Heart left ventricle (tissue), 16 donors: ENCODE measurements at regions of chr11 and their contacts with region 1.

Region 1: GRCh38 chr11:83156150-83156995 is 558 bp upstream of the PCF11 start:
- DNase-seq: peak; percentile 98 to 100 (median 99)
- ATAC-seq: peak; percentile 95 to 98 (median 96)
- H3K4me3 ChIP-seq: peak overlapping the region; percentile 43 to 92 (median 70)
- H3K27ac ChIP-seq: peak overlapping the region; percentile 71 to 99 (median 91)
- H3K4me1 ChIP-seq: peaks cover 2 to 31% (median 19%) of the 10 kb centered on the region in 12 donors
- H3K27me3 ChIP-seq: no peaks in the 10 kb centered on the region
- CTCF ChIP-seq: no peak
- POLR2A ChIP-seq: peak; percentile 17 to 52

Region 2: GRCh38 chr11:82802710-82803109 is 353.7 kb before region 1 on chr11:
- intact Hi-C with region 1: no loop called
- DNase-seq: no peak
- ATAC-seq: no peak
- H3K4me3 ChIP-seq: no peak overlapping the region
- H3K27ac ChIP-seq: no peak overlapping the region
- H3K4me1 ChIP-seq: no peaks in the 10 kb centered on the region
- H3K27me3 ChIP-seq: peaks cover 0 to 16% (median 0%) of the 10 kb centered on the region in 9 donors
- CTCF ChIP-seq: no peak
- POLR2A ChIP-seq: no peak

Region 3: GRCh38 chr11:82927254-82927880 is 229.0 kb before region 1 on chr11:
- intact Hi-C with region 1: loop called in 1 of 10 experiments (anchors 5 kb)
- DNase-seq: no peak
- ATAC-seq: peak in 2 of 4 donors; percentile 41 to 64
- H3K4me3 ChIP-seq: no peak overlapping the region
- H3K27ac ChIP-seq: no peak overlapping the region
- H3K4me1 ChIP-seq: peaks cover 0 to 12% (median 0%) of the 10 kb centered on the region in 12 donors
- H3K27me3 ChIP-seq: no peaks in the 10 kb centered on the region
- CTCF ChIP-seq: peak; percentile 69 to 90 (median 86)
- POLR2A ChIP-seq: no peak

Region 4: GRCh38 chr11:82996966-82997606 is 159.3 kb before region 1 on chr11:
- intact Hi-C with region 1: loop called in 4 of 10 experiments (anchors 5 to 10 kb)
- DNase-seq: no peak
- ATAC-seq: no peak
- H3K4me3 ChIP-seq: no peak overlapping the region
- H3K27ac ChIP-seq: peak overlapping the region in 5 of 12 donors; percentile 8 to 65 (median 40)
- H3K4me1 ChIP-seq: peaks cover 0 to 84% (median 42%) of the 10 kb centered on the region in 12 donors
- H3K27me3 ChIP-seq: no peaks in the 10 kb centered on the region
- CTCF ChIP-seq: no peak
- POLR2A ChIP-seq: no peak

Region 5: GRCh38 chr11:83193315-83194280 is 37.2 kb after region 1 on chr11 and contains the start of gene ANKRD42:
- intact Hi-C with region 1: loop called in 9 of 10 experiments (anchors 1 to 5 kb)
- DNase-seq: peak; percentile 93 to 96 (median 94)
- ATAC-seq: peak; percentile 95 to 98 (median 98)
- H3K4me3 ChIP-seq: peak within 1 kb of the TSS; percentile 49 to 97 (median 84)
- H3K27ac ChIP-seq: peak within 1 kb of the TSS; percentile 58 to 96 (median 89)
- H3K4me1 ChIP-seq: peaks cover 0 to 40% (median 24%) of the 10 kb centered on the region in 12 donors
- H3K27me3 ChIP-seq: no peaks in the 10 kb centered on the region
- CTCF ChIP-seq: no peak
- POLR2A ChIP-seq: peak in 1 of 2 donors; percentile 60
- total RNA-seq, gene ANKRD42: 3.7 to 9.1 (median 6.0) TPM

Region 6: DNA sequence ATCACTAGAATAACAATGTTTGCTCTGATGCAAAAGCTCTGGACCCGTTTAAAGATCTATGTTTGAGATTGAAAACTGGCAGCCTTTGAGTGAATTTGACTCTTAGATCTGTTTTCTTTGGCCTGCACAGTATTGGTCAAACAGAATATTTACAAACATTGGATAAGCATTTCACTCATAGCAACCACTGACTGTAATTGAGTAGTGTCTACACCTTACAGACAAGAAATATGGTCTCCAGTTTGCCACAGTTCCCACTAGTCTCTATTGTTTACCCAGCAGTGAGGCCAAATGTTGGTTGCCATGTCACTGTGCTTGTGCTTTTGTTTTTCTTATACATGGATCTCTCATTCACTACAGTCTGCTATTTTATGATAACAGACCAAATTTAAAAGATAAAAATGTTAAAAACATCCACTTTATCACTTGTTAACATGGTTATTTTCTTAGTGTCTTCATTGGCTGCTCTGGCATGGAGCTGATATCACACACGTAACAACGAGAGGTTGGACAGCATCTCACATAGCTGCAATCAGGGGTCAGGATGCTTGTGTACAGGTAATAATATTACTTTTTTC is 49.3 kb after region 1 on chr11:
- intact Hi-C with region 1: no loop called
- DNase-seq: no peak
- ATAC-seq: no peak
- H3K4me3 ChIP-seq: no peak overlapping the region
- H3K27ac ChIP-seq: no peak overlapping the region
- H3K4me1 ChIP-seq: no peaks in the 10 kb centered on the region
- H3K27me3 ChIP-seq: no peaks in the 10 kb centered on the region
- CTCF ChIP-seq: no peak
- POLR2A ChIP-seq: no peak